Panc1 (cell line): ENCODE measurements at regions of chr1 and their contacts with region 1.

Region 1: DNA sequence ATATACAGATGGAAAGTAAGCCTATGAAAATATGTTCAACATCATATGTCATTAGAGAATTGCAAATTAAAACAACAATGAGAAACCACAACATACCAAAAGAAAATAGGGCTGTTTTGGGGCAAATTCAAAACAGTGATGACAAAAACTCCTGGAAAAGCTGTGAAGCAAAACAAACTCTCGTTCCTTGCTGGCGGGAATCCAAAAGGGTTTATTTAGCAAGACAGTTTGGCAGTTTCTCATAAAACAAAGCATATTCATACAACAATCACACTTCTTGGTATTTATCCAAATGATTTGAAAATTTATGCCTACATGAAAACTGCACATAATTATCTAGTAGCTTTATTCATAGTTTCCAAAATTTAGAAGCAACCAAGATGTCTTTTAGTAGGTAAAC is 44.4 kb downstream of the COL11A1 start:
- DNase-seq: no peak
- ATAC-seq: no peak
- H3K4me3 ChIP-seq: no peak overlapping the region
- H3K27ac ChIP-seq: no peak overlapping the region
- H3K4me1 ChIP-seq: no peaks in the 10 kb centered on the region; the same call in 1 of the 2 replicates
- H3K27me3 ChIP-seq: no peaks in the 10 kb centered on the region
- CTCF ChIP-seq: no peak

Region 2: DNA sequence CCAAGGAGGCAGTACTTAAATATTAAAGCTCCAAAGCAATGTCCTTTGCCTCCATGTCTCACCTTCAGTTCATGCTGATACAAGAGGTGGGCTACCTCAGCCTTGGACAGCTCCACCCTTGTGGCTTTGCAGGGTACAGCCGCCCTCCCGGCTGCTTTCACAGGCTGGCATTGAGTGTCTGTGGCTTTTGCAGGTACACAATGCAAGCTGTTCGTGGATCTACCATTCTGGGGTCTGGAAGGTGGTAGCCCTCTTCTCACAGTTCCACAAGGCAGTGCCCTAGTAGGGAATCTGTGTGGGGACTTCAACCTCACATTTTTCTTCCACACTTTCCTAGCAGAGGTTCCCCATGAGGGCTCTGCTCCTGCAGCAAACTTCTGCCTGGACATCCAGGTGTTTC is 280.4 kb before region 1 on chr1:
- CTCF ChIA-PET with region 1: no interaction called
- POLR2A ChIA-PET with region 1: no interaction called
- in situ Hi-C with region 1: no loop called
- intact Hi-C with region 1: no loop called
- DNase-seq: no peak
- ATAC-seq: no peak
- H3K4me3 ChIP-seq: no peak overlapping the region
- H3K27ac ChIP-seq: no peak overlapping the region
- H3K4me1 ChIP-seq: no peaks in the 10 kb centered on the region
- H3K27me3 ChIP-seq: no peaks in the 10 kb centered on the region
- CTCF ChIP-seq: no peak

Region 3: DNA sequence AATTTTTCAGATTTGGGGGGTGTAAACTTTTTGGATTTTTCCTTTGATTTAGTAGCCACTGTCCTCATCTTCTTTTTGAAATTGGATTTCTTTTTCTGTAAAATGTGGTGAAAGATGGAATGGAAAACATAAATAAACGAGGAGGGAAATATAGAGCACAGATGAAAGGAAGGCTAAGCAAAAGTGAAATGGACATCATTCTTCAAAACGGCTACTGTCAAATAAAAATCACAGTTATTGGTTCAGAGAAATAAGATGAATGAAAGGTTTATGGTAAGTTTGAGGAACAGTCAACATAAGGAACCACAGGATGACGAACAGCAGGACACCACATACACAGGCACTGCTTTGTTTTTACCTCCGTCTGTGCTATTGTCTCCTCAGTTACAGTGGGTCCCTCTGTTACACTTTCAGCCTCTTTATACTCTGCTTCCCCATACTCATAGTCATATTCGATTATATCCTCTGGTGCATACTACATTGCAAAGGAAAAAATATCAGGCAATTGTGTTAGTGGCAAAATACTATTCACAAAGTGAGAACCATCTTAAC is 38.0 kb before region 1 on chr1:
- CTCF ChIA-PET with region 1: no interaction called
- POLR2A ChIA-PET with region 1: no interaction called
- in situ Hi-C with region 1: no loop called
- intact Hi-C with region 1: loop called (anchors 2 kb)
- DNase-seq: no peak
- ATAC-seq: no peak
- H3K4me3 ChIP-seq: no peak overlapping the region
- H3K27ac ChIP-seq: no peak overlapping the region
- H3K4me1 ChIP-seq: no peaks in the 10 kb centered on the region; the same call in 1 of the 2 replicates
- H3K27me3 ChIP-seq: no peaks in the 10 kb centered on the region
- CTCF ChIP-seq: no peak

Region 4: DNA sequence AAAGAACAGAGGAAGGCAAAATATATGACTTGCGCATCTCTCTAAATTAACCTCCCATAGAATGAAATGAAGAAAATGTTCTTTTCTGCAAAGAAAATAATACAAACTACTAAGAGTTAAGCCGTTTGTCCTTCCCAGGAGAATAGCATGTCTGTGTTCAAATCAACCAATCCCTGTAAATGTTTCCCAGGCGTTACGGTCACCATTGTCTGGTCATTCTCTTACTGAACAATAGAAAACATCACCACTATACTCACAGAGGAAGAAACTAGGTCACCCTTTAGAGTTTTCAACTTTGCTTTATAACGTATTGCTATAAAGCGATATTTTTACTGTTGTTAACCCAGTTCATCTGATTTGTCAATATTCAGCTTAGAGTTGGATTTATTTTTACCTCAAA is 10.3 kb after region 1 on chr1:
- CTCF ChIA-PET with region 1: no interaction called
- POLR2A ChIA-PET with region 1: no interaction called
- in situ Hi-C with region 1: no loop called
- intact Hi-C with region 1: no loop called
- DNase-seq: no peak
- ATAC-seq: no peak
- H3K4me3 ChIP-seq: no peak overlapping the region
- H3K27ac ChIP-seq: no peak overlapping the region
- H3K4me1 ChIP-seq: no peaks in the 10 kb centered on the region; the same call in 1 of the 2 replicates
- H3K27me3 ChIP-seq: no peaks in the 10 kb centered on the region
- CTCF ChIP-seq: no peak